ENCODE measurements at regions of chr11 and their contacts with region 1.

Region 1: GRCh38 chr11:72969894-72970335 is 155.7 kb downstream of the ATG16L2 start:
- DNase-seq: peak in 2 of 9 experiments; percentile 26 to 45
- ATAC-seq: peak; percentile 55
- H3K4me3 ChIP-seq: no peak overlapping the region
- H3K4me3 Mint-ChIP-seq: no peak overlapping the region
- H3K27ac ChIP-seq: peak overlapping the region in 1 of 2 experiments; percentile 51
- H3K27ac Mint-ChIP-seq: peak overlapping the region; percentile 33
- H3K4me1 ChIP-seq: peaks cover 4% of the 10 kb centered on the region
- H3K4me1 Mint-ChIP-seq: peaks cover 25% of the 10 kb centered on the region
- H3K27me3 ChIP-seq: no peaks in the 10 kb centered on the region
- H3K27me3 Mint-ChIP-seq: no peaks in the 10 kb centered on the region
- CTCF ChIP-seq: no peak

Region 2: DNA sequence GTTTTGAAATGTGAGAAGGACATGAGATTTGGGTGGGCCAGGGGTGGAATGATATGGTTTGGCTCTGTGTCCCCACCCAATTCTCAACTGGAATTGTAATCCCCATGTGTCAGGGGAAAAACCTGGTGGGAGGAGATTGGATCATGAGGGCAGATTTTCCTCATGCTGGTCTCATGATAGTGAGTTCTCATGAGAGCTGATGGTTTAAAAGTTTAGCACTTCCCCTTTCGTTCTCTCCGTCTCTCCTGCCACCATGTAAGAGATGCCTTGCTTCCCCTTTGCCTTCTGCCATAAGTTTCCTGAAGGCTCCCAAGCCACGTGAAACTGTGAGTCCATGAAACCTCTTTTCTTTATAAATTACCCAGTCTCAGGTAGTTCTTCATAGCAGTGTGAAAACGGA is 58.7 kb after region 1 on chr11:
- CTCF ChIA-PET with region 1: no interaction called
- POLR2A ChIA-PET with region 1: no interaction called
- intact Hi-C with region 1: loop called in 1 of 2 experiments (anchors 10 kb)
- DNase-seq: peak in 1 of 9 experiments; percentile 11
- ATAC-seq: no peak
- H3K4me3 ChIP-seq: no peak overlapping the region
- H3K4me3 Mint-ChIP-seq: no peak overlapping the region
- H3K27ac ChIP-seq: no peak overlapping the region
- H3K27ac Mint-ChIP-seq: no peak overlapping the region
- H3K4me1 ChIP-seq: peaks cover 19% of the 10 kb centered on the region
- H3K4me1 Mint-ChIP-seq: peaks cover 27% of the 10 kb centered on the region
- H3K27me3 ChIP-seq: no peaks in the 10 kb centered on the region
- H3K27me3 Mint-ChIP-seq: no peaks in the 10 kb centered on the region
- CTCF ChIP-seq: no peak